Activated CD4-positive, alpha-beta T cell treated with anti-CD3 and anti-CD28 coated beads for 36 hours (primary cell): ENCODE measurements at regions of chr13 and their contacts with region 1.

Region 1: DNA sequence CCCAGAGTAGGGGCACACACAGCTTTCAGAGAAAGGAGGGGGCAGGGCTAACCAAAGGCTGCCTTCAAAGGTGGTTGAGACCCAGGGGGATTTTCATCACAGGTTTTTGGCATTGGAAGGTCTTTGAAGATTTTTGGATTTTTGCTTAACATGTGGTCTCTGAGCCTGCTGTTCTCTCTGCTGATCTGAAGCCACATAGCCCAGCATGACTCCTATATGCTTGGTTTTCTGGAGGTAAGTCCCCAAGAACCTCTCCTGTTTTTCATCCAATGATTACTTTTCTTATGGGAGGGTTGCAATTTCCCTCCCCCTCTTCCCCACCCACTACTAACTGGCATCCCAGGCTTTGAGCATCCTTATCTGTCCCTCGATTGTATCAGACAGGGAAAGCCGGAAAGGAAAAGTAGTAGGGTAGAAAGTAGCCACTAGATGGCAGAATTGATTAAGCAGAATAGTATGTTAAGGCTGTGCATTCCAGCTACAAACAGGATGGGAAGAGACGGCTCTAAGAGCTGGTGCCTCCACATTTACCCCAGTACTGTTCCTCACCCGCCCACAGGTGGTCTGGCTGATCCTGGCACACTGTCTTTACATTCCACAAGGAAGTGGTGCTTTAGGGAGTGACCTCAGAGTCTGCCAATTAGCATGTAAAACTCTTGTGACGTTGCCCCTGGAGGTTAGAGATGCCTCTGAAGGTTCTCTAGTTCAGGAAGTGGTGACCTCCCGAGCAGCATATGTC is 218.9 kb upstream of the EDNRB start:
- DNase-seq: peak; percentile 8
- ATAC-seq: peak; percentile 88
- H3K4me3 Mint-ChIP-seq: no peak overlapping the region
- H3K27ac Mint-ChIP-seq: no peak overlapping the region
- H3K4me1 Mint-ChIP-seq: peaks cover 3% of the 10 kb centered on the region
- H3K27me3 Mint-ChIP-seq: no peaks in the 10 kb centered on the region

Region 2: DNA sequence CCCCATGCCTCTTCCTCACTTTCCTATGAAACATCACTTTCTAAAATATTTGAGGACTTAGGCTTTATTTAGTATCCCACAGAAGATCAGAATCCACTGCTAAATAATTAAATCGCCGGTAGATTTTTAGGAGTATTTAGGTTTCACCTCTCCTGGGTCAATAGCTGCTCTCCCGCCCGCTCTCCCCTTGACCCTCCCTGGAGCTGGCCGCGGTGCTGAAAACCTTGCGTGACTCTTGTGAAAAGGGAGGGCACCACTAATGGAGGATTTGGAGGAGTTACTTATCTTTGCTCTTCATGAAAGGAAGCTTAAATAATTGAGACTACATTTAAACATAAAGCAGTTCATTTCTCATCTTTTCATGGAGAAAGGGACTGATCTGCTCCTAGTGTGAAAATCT is 451.6 kb after region 1 on chr13:
- CTCF ChIA-PET with region 1: no interaction called
- POLR2A ChIA-PET with region 1: no interaction called
- intact Hi-C with region 1: loop called in 1 of 2 experiments (anchors 5 kb)
- DNase-seq: peak; percentile 36
- ATAC-seq: no peak
- H3K4me3 Mint-ChIP-seq: no peak overlapping the region
- H3K27ac Mint-ChIP-seq: no peak overlapping the region
- H3K4me1 Mint-ChIP-seq: peaks cover 5% of the 10 kb centered on the region
- H3K27me3 Mint-ChIP-seq: peaks cover 68% of the 10 kb centered on the region

Region 3: GRCh38 chr13:78806457-78806856 is 668.9 kb after region 1 on chr13:
- CTCF ChIA-PET with region 1: no interaction called
- POLR2A ChIA-PET with region 1: no interaction called
- intact Hi-C with region 1: loop called in 1 of 2 experiments (anchors 5 kb)
- DNase-seq: no peak
- ATAC-seq: no peak
- H3K4me3 Mint-ChIP-seq: no peak overlapping the region
- H3K27ac Mint-ChIP-seq: no peak overlapping the region
- H3K4me1 Mint-ChIP-seq: no peaks in the 10 kb centered on the region
- H3K27me3 Mint-ChIP-seq: peaks cover 7% of the 10 kb centered on the region

Region 4: GRCh38 chr13:79393564-79394249 is 1256.1 kb after region 1 on chr13:
- CTCF ChIA-PET with region 1: no interaction called
- POLR2A ChIA-PET with region 1: no interaction called
- intact Hi-C with region 1: loop called in 1 of 2 experiments (anchors 2 kb)
- DNase-seq: peak; percentile 33
- ATAC-seq: peak; percentile 22
- H3K4me3 Mint-ChIP-seq: peak overlapping the region; percentile 33
- H3K27ac Mint-ChIP-seq: peak overlapping the region; percentile 39
- H3K4me1 Mint-ChIP-seq: peaks cover 70% of the 10 kb centered on the region
- H3K27me3 Mint-ChIP-seq: no peaks in the 10 kb centered on the region